ENCODE measurements at regions of chr2 and their contacts with region 1.

Region 1: GRCh38 chr2:21317131-21317530 is 193.4 kb downstream of the TDRD15 start:
- DNase-seq: peak; percentile 66
- ATAC-seq: peak; percentile 68

Region 2: DNA sequence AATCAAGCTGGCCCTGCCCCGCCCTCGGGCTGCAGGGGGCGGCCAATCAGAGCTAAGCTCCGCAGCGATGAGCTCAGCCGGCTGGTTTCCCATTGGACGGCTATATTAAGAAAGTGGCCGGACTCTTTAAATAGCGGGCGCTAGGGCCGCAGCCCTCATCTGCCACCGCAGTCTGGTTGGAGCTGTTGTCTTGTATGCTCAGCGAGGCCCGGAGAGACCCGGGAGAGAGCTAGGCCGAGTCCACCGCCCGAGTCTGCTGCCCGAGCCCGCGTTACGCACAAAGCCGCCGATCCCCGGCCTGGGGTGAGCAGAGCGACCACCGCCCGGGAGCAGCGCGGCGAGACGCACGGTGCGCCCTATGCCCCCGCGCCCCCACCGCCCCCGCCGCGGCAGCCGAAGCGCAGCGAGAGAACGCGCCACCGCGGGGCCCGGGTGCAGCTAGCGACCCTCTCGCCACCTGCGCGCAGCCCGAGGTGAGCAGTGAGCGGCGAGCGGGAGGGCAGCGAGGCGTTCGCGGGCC is 870.2 kb before region 1 on chr2 and contains the start of gene RHOB:
- intact Hi-C with region 1: no loop called
- DNase-seq: peak; percentile 98
- ATAC-seq: peak; percentile 90
- total RNA-seq, gene RHOB: 236 TPM

Region 3: DNA sequence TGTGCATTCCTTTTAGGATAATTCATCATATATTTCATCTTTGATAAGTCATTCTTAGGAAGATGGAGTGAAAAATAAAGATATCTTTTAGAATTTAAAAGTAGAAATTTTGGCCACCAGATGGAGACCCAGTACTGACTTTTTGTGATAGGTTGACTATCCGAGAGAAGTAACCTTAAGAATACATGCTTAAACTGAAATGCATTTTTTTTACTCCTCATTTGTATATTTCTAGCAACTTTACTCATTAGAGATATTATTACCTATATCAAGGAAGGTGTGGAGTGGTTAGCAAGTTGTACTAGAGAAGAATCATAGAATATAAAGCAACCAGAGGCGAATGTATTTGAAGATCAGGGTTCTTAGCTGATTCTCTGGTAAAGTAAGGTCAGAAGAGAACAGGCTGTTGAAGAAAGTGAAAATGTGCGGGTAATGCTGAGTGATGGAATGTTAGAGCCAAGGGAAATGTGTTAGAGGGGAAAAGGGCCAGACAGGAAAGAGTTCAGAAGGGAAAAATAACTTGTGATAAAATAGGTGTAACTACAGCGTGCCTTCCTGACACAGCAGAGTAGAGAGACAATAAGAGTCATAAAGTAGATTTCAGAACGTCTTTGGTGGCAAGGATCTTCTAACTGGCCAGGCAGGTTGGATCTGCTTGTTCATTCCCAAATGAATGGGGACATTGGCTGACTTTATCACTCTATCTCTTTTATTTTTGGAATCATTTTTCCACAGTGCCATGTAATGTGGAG is 141.1 kb before region 1 on chr2:
- intact Hi-C with region 1: loop called (anchors 5 kb)
- DNase-seq: no peak
- ATAC-seq: peak; percentile 39

Measured in sciatic nerve (tissue), 2 donors.